GM12878 (cell line): ENCODE measurements at regions of chr19 and their contacts with region 1.

Region 1: DNA sequence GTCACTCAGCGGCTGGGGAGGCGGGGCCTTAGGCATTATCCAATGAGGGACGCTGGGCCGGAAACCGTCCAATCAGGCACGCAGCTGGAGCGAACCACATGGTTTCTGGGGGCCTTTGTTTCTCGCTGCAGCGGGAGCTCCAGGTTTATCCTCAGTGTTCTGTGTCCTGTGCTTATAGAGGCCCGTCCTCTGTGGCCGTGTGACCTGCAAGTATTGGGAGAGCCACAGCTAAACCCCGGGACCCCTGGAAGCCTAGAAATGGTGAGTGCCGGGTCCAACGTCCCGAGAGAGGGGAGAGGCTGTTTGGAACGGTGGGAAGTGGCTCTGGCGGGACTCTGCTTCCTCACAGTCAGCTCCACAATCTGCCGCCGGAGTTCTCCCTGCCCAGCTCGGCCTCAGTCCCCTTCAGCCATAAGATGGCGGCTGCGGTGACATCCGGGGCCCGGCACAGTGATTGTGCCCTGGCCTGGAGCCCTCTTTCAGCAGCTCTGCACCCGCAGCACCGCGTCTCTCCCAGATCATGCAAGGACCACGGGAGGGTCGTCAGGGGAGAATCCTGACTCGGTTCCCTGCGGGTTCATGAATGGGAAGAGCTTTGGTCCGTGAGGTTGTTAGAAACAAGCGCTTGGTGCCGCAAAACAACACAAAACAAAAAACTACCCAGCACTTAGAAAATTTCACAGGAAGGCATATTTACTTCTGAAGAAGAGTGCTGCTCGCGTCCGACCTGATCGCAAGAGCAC is at the start of gene ZNF253:
- DNase-seq: peak; percentile 83
- ATAC-seq: peak; percentile 96
- H3K4me3 ChIP-seq: peak within 1 kb of the TSS; percentile 85
- H3K27ac ChIP-seq: peak within 1 kb of the TSS; percentile 96
- H3K4me1 ChIP-seq: no peaks in the 10 kb centered on the region
- H3K27me3 ChIP-seq: no peaks in the 10 kb centered on the region
- CTCF ChIP-seq: no peak
- EP300 ChIP-seq: no peak
- POLR2A ChIP-seq: peak; percentile 91
- RAD21 ChIP-seq: no peak
- polyA plus RNA-seq, gene ZNF253: 2.6 to 3.3 TPM

Region 2: DNA sequence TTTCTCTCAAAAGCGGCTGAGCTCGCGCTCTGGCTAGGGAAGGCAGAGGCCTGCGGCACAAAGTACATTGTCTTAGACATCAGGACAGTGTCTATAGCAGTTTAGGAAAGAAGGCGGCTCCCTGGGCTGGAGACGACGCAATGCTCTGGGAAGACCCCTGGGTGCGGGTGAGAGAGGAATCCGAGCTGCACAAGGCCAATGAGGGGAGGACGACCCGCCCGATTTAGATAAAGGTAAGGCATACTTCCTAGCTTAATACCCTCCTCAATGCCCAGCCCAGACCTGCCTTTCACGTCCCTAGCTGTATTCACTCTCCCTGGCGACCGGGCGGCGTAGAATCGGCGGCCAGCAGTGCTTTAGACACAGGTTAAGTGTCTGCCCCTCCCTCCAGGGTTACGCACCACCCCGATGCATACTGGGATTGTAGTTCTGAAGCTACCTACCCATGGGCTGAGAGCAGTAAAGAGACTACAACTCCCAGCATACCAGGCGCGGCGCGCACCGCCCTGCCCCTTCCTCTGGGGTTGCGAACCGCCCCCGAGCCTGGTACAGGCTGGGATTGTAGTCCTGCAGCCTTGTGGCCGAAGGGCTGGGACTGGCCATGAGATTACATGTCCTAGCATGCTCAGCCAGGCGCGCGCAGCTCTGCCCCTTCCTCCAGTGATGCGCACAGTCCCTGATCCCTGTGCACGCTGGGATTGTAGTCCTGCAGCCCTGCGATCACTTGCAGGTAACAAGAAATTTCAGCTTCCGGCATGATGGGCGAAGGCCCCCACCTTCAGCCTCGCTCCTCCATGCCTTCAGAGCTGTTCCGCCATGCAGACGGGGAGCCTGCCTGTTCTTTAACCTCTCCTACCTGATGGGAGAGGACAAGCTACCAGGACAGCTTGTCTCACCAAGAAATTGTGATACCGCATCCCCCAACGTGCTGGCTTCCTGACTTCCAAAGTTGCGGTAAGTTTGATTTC is 89.6 kb before region 1 on chr19:
- CTCF ChIA-PET with region 1: interaction called, 4 read pairs
- POLR2A ChIA-PET with region 1: no interaction called
- RAD21 ChIA-PET with region 1: interaction called, 16 read pairs
- SMC1A ChIA-PET with region 1: interaction called, 18 read pairs
- in situ Hi-C with region 1: no loop called
- intact Hi-C with region 1: no loop called
- DNase-seq: peak; percentile 96
- ATAC-seq: peak; percentile 99
- H3K4me3 ChIP-seq: peak overlapping the region; percentile 78
- H3K27ac ChIP-seq: peak overlapping the region; percentile 68
- H3K4me1 ChIP-seq: no peaks in the 10 kb centered on the region
- H3K27me3 ChIP-seq: no peaks in the 10 kb centered on the region
- CTCF ChIP-seq: peak in 1 of 3 experiments; percentile 8; a peak in 1 of 6 replicates
- EP300 ChIP-seq: no peak
- POLR2A ChIP-seq: peak; percentile 77
- RAD21 ChIP-seq: no peak

Region 3: GRCh38 chr19:19821366-19821951 is 44.5 kb before region 1 on chr19 and contains the start of gene ZNF506:
- CTCF ChIA-PET with region 1: interaction called, 6 read pairs
- POLR2A ChIA-PET with region 1: interaction called, 4 read pairs
- RAD21 ChIA-PET with region 1: interaction called, 5 read pairs
- SMC1A ChIA-PET with region 1: interaction called, 8 read pairs
- in situ Hi-C with region 1: no loop called
- intact Hi-C with region 1: loop called (anchors 5 kb)
- DNase-seq: peak; percentile 70
- ATAC-seq: peak; percentile 96
- H3K4me3 ChIP-seq: peak within 1 kb of the TSS; percentile 90
- H3K27ac ChIP-seq: peak within 1 kb of the TSS; percentile 96
- H3K4me1 ChIP-seq: peaks cover 2% of the 10 kb centered on the region; the same call in 1 of the 2 replicates
- H3K27me3 ChIP-seq: no peaks in the 10 kb centered on the region
- CTCF ChIP-seq: no peak
- EP300 ChIP-seq: no peak
- POLR2A ChIP-seq: peak; percentile 97
- RAD21 ChIP-seq: no peak
- polyA plus RNA-seq, gene ZNF506: 3.5 to 4.0 TPM

Region 4: GRCh38 chr19:19877724-19878123 is 11.8 kb after region 1 on chr19:
- CTCF ChIA-PET with region 1: interaction called, 3 read pairs
- POLR2A ChIA-PET with region 1: no interaction called
- RAD21 ChIA-PET with region 1: no interaction called
- SMC1A ChIA-PET with region 1: interaction called, 13 read pairs
- in situ Hi-C with region 1: no loop called
- intact Hi-C with region 1: no loop called
- DNase-seq: no peak
- ATAC-seq: no peak
- H3K4me3 ChIP-seq: no peak overlapping the region
- H3K27ac ChIP-seq: no peak overlapping the region
- H3K4me1 ChIP-seq: no peaks in the 10 kb centered on the region
- H3K27me3 ChIP-seq: no peaks in the 10 kb centered on the region
- CTCF ChIP-seq: no peak
- EP300 ChIP-seq: no peak
- POLR2A ChIP-seq: no peak
- RAD21 ChIP-seq: no peak